A673 (cell line): ENCODE measurements at regions of chr11 and their contacts with region 1.

Region 1: GRCh38 chr11:72483412-72484186 is 49.3 kb upstream of the CLPB start:
- DNase-seq: peak; percentile 64
- H3K4me3 ChIP-seq: no peak overlapping the region
- H3K27ac ChIP-seq: no peak overlapping the region
- H3K4me1 ChIP-seq: no peaks in the 10 kb centered on the region
- H3K27me3 ChIP-seq: peaks cover 4% of the 10 kb centered on the region
- CTCF ChIP-seq: no peak

Region 2: DNA sequence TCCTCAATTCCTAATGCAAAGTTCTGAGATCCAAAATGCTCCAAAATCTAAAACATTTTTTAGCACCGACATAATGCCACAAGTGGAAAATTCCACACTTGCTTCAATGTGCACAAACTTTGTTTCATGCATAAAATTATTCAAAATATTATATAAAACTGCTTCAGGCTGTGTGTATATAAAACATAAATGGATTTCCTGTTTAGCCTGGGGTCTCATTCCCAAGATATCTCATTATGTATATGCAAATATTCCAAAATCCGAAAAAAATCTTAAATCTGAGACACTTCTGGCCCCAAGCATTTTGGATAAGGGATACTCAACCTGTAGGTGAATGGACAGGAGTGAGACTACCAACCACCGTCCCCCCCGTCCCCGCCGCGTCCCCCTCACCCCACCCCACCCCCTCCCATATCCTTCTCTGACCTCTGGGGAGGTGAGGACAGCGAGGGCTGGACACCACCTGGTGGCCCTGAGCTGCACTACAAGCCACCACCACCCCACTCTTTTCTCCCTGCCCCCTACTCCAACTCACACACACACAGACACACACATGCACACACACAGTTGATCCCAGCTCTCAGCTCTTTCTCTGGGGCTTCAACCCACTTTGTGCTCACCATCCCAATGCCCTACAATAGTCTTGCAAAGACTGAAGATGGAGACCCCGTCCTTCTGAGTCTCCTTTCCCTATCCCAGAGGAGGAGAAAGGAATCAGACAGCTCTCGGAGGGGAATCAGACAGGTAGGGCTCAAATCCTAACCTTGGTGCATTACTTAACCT is 89.7 kb after region 1 on chr11:
- CTCF ChIA-PET with region 1: interaction called, 3 read pairs
- POLR2A ChIA-PET with region 1: no interaction called
- intact Hi-C with region 1: loop called (anchors 2 kb)
- DNase-seq: peak; percentile 42
- H3K4me3 ChIP-seq: no peak overlapping the region
- H3K27ac ChIP-seq: no peak overlapping the region
- H3K4me1 ChIP-seq: no peaks in the 10 kb centered on the region
- H3K27me3 ChIP-seq: no peaks in the 10 kb centered on the region
- CTCF ChIP-seq: peak; percentile 60

Region 3: GRCh38 chr11:72642884-72643511 is 159.4 kb after region 1 on chr11:
- CTCF ChIA-PET with region 1: no interaction called
- POLR2A ChIA-PET with region 1: no interaction called
- intact Hi-C with region 1: loop called (anchors 2 kb)
- DNase-seq: peak; percentile 70
- H3K4me3 ChIP-seq: peak overlapping the region; percentile 37
- H3K27ac ChIP-seq: no peak overlapping the region
- H3K4me1 ChIP-seq: peaks cover 8% of the 10 kb centered on the region
- H3K27me3 ChIP-seq: peaks cover 21% of the 10 kb centered on the region
- CTCF ChIP-seq: peak; percentile 97

Region 4: DNA sequence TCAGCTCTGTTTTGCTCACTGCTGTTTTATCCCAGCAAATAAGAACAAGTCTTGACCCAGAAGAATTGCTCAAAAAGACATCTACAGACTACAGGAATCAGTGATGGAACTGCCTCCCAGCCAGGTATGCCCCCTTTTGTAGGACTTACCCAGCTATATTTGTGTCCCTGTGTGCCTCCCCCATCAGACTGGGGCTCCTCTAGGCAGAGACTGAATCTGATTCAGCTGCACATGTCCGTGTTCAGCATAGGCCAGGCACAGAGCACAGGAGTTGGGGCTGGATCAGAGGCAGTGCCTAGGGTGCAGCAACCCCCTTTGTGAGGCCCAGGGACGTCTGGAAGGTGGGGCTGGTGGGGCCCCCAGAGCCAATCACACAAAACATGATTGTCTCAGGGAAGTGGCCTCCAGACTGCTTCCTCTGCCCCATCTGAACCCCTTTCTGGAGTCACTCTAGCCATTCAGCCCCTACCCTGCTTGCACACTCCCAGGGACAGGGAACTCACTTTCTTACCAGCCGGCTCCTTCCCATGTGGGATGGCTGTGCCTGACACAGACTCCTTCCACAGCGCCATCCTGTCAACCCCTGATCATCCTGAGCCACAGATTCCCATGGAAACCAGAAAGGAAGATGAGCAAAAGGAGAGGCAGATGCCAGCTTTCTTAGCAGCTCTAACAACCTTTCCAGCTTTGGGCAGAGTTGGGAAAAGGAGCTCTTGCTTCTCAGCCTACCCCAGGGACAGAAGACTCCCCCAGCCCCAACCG is 165.8 kb after region 1 on chr11:
- CTCF ChIA-PET with region 1: interaction called, 18 read pairs
- POLR2A ChIA-PET with region 1: no interaction called
- intact Hi-C with region 1: no loop called
- DNase-seq: no peak
- H3K4me3 ChIP-seq: no peak overlapping the region
- H3K27ac ChIP-seq: no peak overlapping the region
- H3K4me1 ChIP-seq: no peaks in the 10 kb centered on the region
- H3K27me3 ChIP-seq: no peaks in the 10 kb centered on the region
- CTCF ChIP-seq: no peak

Region 5: DNA sequence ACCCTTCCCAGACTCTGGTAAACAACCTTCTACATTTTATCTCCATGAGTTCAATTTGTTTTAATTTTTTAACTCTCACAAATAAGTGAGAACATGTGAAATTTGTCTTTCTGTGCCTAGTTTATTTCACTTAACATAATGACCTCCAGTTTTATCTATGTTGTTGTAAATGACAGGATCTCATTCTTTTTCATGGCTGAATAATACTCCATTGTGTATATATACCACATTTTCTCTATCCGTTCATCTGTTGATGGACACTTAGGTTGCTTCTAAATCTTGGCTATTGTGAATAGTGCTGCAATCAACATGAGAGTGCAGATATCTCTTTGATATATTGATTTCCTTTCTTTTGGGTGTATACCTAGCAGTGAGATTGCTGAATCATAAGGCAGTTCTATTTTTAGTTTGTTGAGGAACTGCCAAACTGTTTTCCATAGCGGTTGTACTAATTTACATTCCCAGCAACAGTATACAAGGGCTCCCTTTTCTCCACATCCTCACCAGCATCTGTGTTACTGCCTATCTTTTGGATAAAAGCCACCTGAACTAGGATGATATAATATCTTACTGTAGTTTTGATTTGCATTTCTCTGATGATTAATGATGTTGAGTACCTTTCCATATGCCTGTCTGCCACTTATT is 424.6 kb after region 1 on chr11:
- CTCF ChIA-PET with region 1: no interaction called
- POLR2A ChIA-PET with region 1: no interaction called
- intact Hi-C with region 1: no loop called
- DNase-seq: no peak
- H3K4me3 ChIP-seq: no peak overlapping the region
- H3K27ac ChIP-seq: no peak overlapping the region
- H3K4me1 ChIP-seq: no peaks in the 10 kb centered on the region
- H3K27me3 ChIP-seq: no peaks in the 10 kb centered on the region
- CTCF ChIP-seq: no peak